ENCODE measurements at regions of chr11 and their contacts with region 1.

Region 1: GRCh38 chr11:76974179-76974891 is 59.9 kb upstream of the B3GNT6 start:
- DNase-seq: no peak
- H3K4me3 ChIP-seq: no peak overlapping the region
- H3K27ac ChIP-seq: no peak overlapping the region
- H3K4me1 ChIP-seq: no peaks in the 10 kb centered on the region
- H3K27me3 ChIP-seq: no peaks in the 10 kb centered on the region
- CTCF ChIP-seq: no peak

Region 2: DNA sequence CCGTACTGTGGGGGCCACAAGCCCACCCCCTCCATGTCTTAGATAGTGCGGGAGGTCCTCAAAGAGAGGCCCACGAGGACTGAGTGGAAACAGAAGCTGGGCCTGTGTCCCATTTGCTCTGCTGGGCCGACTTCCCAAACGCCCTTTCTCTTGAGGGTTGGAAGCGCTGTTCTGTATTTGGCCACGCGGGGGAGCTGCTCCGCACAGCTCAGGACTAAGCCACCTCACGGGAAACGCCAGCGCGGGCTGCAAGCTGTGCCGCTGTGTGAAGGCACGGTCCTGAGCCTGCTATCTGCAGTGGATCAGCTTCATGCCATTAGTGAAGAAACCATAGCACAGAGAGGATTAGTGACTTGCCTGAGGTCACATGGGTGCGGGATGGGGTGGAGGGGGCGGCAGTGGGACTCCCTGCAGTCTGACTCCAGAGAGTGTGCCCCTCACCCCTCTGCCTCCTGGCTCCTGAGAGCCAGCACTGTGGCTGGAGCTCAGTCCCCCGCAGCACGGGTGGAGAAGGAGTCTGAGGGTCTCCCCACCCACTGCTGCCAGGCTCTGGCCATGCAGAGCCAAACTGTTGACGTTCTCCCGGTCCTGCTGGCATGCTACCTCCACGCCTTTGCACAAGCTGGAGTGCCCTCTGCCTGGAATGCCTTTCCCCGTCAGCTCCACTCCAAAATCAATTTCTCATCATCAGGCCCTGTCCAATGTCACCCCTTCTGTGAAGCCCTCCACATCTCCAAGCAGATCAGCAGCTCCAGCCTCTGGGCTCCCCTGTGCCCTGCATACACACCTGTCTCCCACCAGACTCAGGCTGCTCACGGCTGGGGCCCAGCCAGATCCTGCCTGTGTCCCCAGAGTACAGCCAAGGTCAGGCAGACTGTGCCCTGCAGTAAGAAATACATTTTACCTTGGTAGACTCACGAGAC is 252.3 kb before region 1 on chr11:
- CTCF ChIA-PET with region 1: interaction called, 11 read pairs
- dilution Hi-C with region 1: no loop called
- in situ Hi-C with region 1: no loop called
- intact Hi-C with region 1: no loop called
- DNase-seq: peak; percentile 57
- H3K4me3 ChIP-seq: no peak overlapping the region
- H3K27ac ChIP-seq: no peak overlapping the region
- H3K4me1 ChIP-seq: no peaks in the 10 kb centered on the region
- H3K27me3 ChIP-seq: peaks cover 2% of the 10 kb centered on the region
- CTCF ChIP-seq: peak; percentile 80 to 95

Region 3: DNA sequence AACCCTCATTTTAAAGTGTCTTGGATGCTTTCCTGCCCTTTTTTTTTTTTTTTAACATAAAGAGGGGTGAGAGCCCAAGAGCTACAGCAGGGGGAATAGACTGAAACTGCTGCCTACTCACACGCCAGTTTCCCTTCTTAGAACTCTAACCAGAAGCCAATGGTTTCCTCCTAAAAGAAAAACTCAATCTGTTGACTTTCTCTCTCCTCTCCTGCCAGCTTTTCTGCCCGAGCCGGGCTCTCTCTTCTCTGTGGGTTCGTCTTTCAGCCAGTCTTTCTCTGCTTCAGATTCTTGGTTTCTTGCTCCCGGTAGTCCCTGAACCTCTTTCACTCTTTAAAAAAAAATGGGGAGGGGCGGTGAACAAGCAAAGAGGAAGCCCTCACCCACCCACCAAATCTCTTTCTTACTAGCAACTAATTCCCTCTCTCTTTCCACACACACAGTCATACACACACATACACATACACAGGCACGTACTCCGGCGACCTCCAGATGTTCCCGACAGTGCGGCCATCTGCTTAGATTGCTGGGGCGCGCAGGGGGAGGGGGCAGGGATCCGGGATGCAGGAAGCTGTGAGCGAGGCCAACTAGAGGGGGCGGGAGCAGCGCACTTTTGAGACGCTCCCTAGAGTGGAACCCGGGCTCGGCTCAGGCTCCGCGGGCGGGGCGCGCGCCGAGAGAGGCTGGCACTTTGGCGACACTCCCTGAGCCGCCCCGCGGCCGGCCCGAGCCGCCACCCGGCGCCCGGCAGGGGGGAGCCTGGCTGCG is 191.6 kb before region 1 on chr11:
- CTCF ChIA-PET with region 1: no interaction called
- dilution Hi-C with region 1: no loop called
- in situ Hi-C with region 1: no loop called
- intact Hi-C with region 1: no loop called
- DNase-seq: peak; percentile 92
- H3K4me3 ChIP-seq: peak overlapping the region; percentile 86 to 98 (median 97)
- H3K27ac ChIP-seq: peak overlapping the region; percentile 89
- H3K4me1 ChIP-seq: peaks cover 42% of the 10 kb centered on the region
- H3K27me3 ChIP-seq: no peaks in the 10 kb centered on the region
- CTCF ChIP-seq: no peak